ENCODE measurements at regions of chr20 and their contacts with region 1.

Region 1: DNA sequence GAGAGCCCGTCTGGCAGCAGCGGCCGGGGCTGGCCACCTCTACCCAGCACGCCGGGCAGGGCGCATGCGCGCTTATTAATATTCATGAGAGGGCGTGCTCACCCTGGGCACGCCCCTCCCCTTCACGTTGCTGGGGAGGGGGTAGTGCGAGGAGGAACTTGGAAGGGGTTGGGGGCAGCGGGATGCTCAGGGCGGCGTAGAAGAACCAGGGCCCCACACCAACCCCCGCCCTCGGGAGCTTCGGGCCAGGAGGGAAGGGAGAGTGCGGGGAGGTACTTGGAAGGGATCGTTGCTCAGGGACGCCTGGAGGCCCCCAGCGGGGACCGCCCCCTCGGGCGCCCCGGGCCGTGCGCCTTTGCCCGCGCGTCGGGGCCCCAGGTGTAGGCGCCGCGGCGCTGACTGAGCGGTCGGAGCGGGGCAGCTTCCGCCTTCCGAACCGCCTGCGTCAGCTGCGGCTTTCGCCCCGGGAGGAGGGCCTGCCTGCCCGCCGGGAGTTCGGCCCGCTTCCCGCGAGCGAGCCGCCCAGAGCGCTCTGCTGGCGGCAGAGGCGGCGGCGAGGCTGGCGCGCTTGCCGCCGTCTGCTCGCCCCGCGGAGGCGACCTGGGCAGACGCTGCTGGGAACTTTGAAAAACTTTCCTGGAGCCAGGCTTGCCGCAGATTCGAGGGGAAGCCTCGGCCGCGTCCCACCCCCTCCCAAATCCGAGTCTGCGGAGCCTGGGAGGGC is at the start of gene JAG1:
- DNase-seq: peak; percentile 96
- H3K4me3 ChIP-seq: peak within 1 kb of the TSS; percentile 82
- H3K27ac ChIP-seq: peak within 1 kb of the TSS; percentile 86
- H3K4me1 ChIP-seq: peaks cover 9% of the 10 kb centered on the region; the same call in 1 of the 2 replicates
- H3K27me3 ChIP-seq: no peaks in the 10 kb centered on the region
- total RNA-seq, gene JAG1: 4.8 and 8.4 TPM in 2 replicates

Region 2: GRCh38 chr20:11204926-11205768 is 531.0 kb after region 1 on chr20:
- in situ Hi-C with region 1: loop called (anchors 10 kb)
- DNase-seq: peak; percentile 75
- H3K4me3 ChIP-seq: no peak overlapping the region
- H3K27ac ChIP-seq: no peak overlapping the region
- H3K4me1 ChIP-seq: peaks cover 16% of the 10 kb centered on the region
- H3K27me3 ChIP-seq: no peaks in the 10 kb centered on the region